PC-9 (cell line): ENCODE measurements at regions of chr11 and their contacts with region 1.

Region 1: GRCh38 chr11:75910426-75911145 is 95.6 kb downstream of the UVRAG start:
- DNase-seq: no peak
- H3K4me3 ChIP-seq: no peak overlapping the region
- H3K27ac ChIP-seq: no peak overlapping the region
- H3K4me1 ChIP-seq: no peaks in the 10 kb centered on the region
- H3K27me3 ChIP-seq: no peaks in the 10 kb centered on the region
- CTCF ChIP-seq: no peak

Region 2: GRCh38 chr11:75839851-75840250 is 70.7 kb before region 1 on chr11:
- CTCF ChIA-PET with region 1: no interaction called
- POLR2A ChIA-PET with region 1: no interaction called
- intact Hi-C with region 1: no loop called
- DNase-seq: no peak
- H3K4me3 ChIP-seq: no peak overlapping the region
- H3K27ac ChIP-seq: no peak overlapping the region
- H3K4me1 ChIP-seq: peaks cover 16% of the 10 kb centered on the region
- H3K27me3 ChIP-seq: no peaks in the 10 kb centered on the region
- CTCF ChIP-seq: no peak

Region 3: GRCh38 chr11:77411717-77412441 is 1501.3 kb after region 1 on chr11:
- CTCF ChIA-PET with region 1: no interaction called
- POLR2A ChIA-PET with region 1: interaction called, 29 read pairs
- intact Hi-C with region 1: no loop called
- DNase-seq: peak; percentile 84 to 94
- H3K4me3 ChIP-seq: peak overlapping the region; percentile 44; the same call in 1 of the 2 replicates
- H3K27ac ChIP-seq: no peak overlapping the region
- H3K4me1 ChIP-seq: peaks cover 31% of the 10 kb centered on the region
- H3K27me3 ChIP-seq: no peaks in the 10 kb centered on the region
- CTCF ChIP-seq: no peak